Breast epithelium (tissue), 4 donors: ENCODE measurements at regions of chrX and their contacts with region 1.

Region 1: GRCh38 chrX:113962343-113962742 is 621.5 kb upstream of the HTR2C start:
- DNase-seq: no peak
- H3K4me3 ChIP-seq: no peak overlapping the region
- H3K27ac ChIP-seq: no peak overlapping the region
- H3K4me1 ChIP-seq: no peaks in the 10 kb centered on the region
- H3K27me3 ChIP-seq: peaks cover 0 to 37% of the 10 kb centered on the region in 2 donors
- CTCF ChIP-seq: no peak
- POLR2A ChIP-seq: no peak

Region 2: DNA sequence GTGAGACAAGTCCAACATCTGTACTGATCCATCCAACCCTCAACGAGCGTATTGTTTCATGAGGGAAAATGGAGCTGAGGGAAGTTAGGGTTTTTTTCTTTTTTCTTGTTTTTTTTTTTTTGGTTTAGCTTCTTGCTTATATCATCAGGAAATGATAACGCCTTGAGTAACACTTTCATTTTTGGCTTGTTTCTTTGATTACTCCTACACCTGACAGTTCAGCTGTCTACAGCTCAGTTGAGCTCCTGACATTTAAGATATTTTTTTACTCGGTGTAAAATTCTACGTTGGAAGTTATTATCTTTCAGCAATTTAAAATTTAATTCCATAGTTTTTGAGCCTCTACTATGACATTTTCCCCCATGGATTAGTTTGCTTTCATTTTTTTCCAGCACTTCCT is 69.5 kb before region 1 on chrX:
- intact Hi-C with region 1: no loop called
- DNase-seq: no peak
- H3K4me3 ChIP-seq: no peak overlapping the region
- H3K27ac ChIP-seq: no peak overlapping the region
- H3K4me1 ChIP-seq: no peaks in the 10 kb centered on the region
- H3K27me3 ChIP-seq: peaks cover 0 to 31% of the 10 kb centered on the region in 2 donors
- CTCF ChIP-seq: no peak
- POLR2A ChIP-seq: no peak

Region 3: GRCh38 chrX:114252186-114252585 is 289.8 kb after region 1 on chrX:
- intact Hi-C with region 1: loop called (anchors 5 kb)
- DNase-seq: no peak
- H3K4me3 ChIP-seq: no peak overlapping the region
- H3K27ac ChIP-seq: no peak overlapping the region
- H3K4me1 ChIP-seq: no peaks in the 10 kb centered on the region
- H3K27me3 ChIP-seq: peaks cover 0 to 28% of the 10 kb centered on the region in 2 donors
- CTCF ChIP-seq: no peak
- POLR2A ChIP-seq: no peak

Region 4: DNA sequence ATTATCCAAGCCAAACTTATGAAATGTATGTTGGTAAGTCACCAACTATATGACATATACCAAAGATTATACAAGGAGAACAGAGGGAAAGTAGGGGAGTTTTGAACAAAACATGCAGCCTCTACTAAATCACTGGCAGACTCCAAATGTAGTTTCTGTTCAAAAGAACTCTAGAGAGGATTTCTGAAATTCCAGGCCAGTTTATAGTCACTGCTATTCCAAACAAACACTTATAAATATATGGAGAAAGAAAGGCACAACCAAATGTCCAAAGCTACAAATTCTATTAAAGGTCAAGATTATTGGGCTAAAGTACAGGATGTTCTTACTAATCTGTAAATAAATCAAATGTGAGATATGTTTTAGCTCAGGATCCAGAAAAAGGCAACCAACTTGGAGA is 1274.2 kb after region 1 on chrX:
- intact Hi-C with region 1: no loop called
- DNase-seq: no peak
- H3K4me3 ChIP-seq: no peak overlapping the region
- H3K27ac ChIP-seq: no peak overlapping the region
- H3K4me1 ChIP-seq: no peaks in the 10 kb centered on the region
- H3K27me3 ChIP-seq: peaks cover 0 to 65% of the 10 kb centered on the region in 2 donors
- CTCF ChIP-seq: no peak
- POLR2A ChIP-seq: no peak